ENCODE measurements at regions of chr2 and their contacts with region 1.

Region 1: GRCh38 chr2:179272406-179273192 is 8.0 kb upstream of the SESTD1 start:
- DNase-seq: no peak
- ATAC-seq: peak; percentile 77
- H3K4me3 ChIP-seq: no peak overlapping the region
- H3K27ac ChIP-seq: peak overlapping the region; percentile 49 to 77
- H3K4me1 ChIP-seq: peaks cover 4 to 14% of the 10 kb centered on the region in 2 donors
- H3K27me3 ChIP-seq: no peaks in the 10 kb centered on the region

Region 2: GRCh38 chr2:179234658-179235240 is 37.9 kb before region 1 on chr2:
- intact Hi-C with region 1: loop called in 1 of 2 experiments (anchors 5 kb)
- DNase-seq: no peak
- ATAC-seq: no peak
- H3K4me3 ChIP-seq: no peak overlapping the region
- H3K27ac ChIP-seq: no peak overlapping the region
- H3K4me1 ChIP-seq: peaks cover 2 to 14% of the 10 kb centered on the region in 2 donors
- H3K27me3 ChIP-seq: no peaks in the 10 kb centered on the region

Measured in aorta (tissue), 5 donors.